ENCODE measurements at regions of chr14 and their contacts with region 1.

Region 1: DNA sequence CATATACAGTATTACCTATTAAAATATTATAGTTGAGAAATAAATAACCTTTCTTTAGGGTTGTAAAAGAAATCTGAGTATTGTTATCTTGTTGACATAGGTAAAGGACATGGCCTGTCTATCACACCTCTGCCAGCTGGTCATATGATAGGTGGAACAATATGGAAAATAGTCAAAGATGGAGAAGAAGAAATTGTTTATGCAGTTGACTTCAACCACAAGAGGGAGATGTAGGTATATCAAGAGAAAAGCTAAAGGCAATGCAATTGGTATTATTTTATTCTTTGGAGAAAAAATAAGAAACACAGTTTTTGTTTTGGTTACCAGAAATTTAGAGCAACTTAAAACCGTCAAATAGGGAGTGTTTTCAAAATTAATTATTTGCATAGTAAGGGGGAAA is 13.5 kb downstream of the CPSF2 start:
- DNase-seq: no peak
- H3K4me3 Mint-ChIP-seq: no peak overlapping the region
- H3K27ac Mint-ChIP-seq: no peak overlapping the region
- H3K4me1 Mint-ChIP-seq: peaks cover 2% of the 10 kb centered on the region
- H3K27me3 Mint-ChIP-seq: no peaks in the 10 kb centered on the region

Region 2: GRCh38 chr14:92254786-92255185 is 119.5 kb after region 1 on chr14:
- CTCF ChIA-PET with region 1: no interaction called
- intact Hi-C with region 1: no loop called
- DNase-seq: no peak
- H3K4me3 Mint-ChIP-seq: no peak overlapping the region
- H3K27ac Mint-ChIP-seq: no peak overlapping the region
- H3K4me1 Mint-ChIP-seq: peaks cover 9% of the 10 kb centered on the region
- H3K27me3 Mint-ChIP-seq: peaks cover 49% of the 10 kb centered on the region

Region 3: DNA sequence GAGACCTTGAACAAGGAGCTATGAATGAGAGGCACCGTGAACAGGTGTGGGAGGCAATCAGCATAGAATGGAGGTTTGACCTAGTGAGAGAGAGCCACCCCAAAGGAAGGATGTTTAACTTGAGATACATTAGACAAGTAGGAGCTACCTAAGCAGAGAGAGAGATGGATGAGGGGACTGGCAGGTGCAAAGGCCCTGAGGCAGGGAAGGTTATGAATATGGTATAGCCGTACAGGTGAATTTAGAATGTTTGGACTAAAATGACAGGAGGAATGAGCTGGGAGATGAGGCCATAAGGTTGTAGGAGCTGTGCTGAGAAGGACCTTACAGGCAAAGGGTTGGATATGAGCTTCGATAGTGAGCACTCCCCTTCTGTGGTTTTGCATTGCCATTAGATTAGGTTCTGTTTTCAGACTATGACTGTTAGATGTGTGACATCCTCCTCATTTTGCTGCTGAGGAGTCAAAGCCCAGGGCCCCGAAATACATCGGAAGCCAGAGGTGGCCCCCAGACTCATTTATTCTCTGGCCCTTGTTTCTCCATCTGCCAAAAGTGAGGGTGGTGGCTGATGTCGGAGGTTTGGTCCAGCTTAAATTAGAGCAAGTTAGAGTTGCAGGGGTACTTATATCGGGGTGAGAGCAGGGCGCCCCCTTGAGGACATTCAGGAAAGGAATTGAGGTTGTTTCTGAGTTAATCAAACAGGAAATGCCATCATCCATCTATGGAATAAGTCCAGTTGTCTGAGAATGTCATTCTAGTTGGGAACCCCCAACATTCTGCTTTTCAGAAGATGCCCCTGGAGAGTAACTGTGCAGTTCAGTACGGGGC is 217.1 kb after region 1 on chr14:
- CTCF ChIA-PET with region 1: interaction called, 3 read pairs
- intact Hi-C with region 1: loop called (anchors 1 kb)
- DNase-seq: peak; percentile 70
- H3K4me3 Mint-ChIP-seq: no peak overlapping the region
- H3K27ac Mint-ChIP-seq: no peak overlapping the region
- H3K4me1 Mint-ChIP-seq: no peaks in the 10 kb centered on the region
- H3K27me3 Mint-ChIP-seq: peaks cover 3% of the 10 kb centered on the region

Region 4: GRCh38 chr14:92603309-92604242 is 468.3 kb after region 1 on chr14:
- CTCF ChIA-PET with region 1: no interaction called
- intact Hi-C with region 1: loop called (anchors 10 kb)
- DNase-seq: peak; percentile 71
- H3K4me3 Mint-ChIP-seq: no peak overlapping the region
- H3K27ac Mint-ChIP-seq: no peak overlapping the region
- H3K4me1 Mint-ChIP-seq: peaks cover 20% of the 10 kb centered on the region
- H3K27me3 Mint-ChIP-seq: no peaks in the 10 kb centered on the region